ENCODE measurements at regions of chr12 and their contacts with region 1.

Region 1: DNA sequence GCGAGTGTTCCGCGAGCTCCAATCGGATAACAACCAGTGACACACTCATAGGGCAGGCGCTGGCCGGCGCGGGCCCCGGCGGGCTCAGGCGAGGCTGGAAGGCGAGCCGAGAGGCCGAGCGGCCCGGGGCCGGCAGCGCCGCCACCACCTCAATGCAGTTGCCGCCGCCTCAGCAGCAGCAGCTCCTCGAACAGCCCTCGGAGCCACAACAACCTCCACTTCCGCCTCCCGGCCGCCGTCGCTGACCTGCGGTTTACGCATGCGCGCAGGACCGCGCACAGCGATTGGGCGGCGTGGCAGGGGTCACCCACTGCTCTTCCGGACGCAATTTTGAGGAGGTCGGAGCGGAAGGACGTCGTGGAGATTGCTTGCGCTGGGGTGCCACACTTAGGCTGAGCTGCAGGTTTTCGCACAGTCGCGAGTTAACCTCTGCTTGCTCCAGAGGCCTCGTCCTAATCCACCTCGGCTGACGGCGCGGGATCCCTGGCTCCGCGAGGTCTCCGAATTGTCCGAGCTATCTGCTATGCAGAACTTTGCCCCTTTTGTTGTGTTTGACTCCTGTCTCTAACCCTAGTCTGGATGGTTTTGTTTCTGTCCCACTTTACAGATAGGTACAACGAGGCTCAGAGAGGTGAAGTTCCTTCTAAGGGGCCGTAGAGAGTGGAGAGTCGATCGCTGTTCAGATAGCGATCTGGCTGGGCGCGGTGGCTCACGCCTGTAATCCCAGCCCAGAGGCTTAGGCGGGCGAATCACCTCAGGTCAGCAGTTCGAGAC is at the starts of genes ACAD10 and BRAP:
- DNase-seq: peak; percentile 95 to 96
- H3K4me3 ChIP-seq: peak within 1 kb of the TSS; percentile 71
- H3K4me3 Mint-ChIP-seq: peak within 1 kb of the TSS; percentile 92
- H3K27ac Mint-ChIP-seq: peak within 1 kb of the TSS; percentile 95
- H3K4me1 ChIP-seq: peaks cover 9% of the 10 kb centered on the region; the same call in 1 of the 2 replicates
- H3K4me1 Mint-ChIP-seq: peaks cover 21% of the 10 kb centered on the region
- H3K27me3 ChIP-seq: no peaks in the 10 kb centered on the region
- H3K27me3 Mint-ChIP-seq: no peaks in the 10 kb centered on the region
- CTCF ChIP-seq: no peak
- total RNA-seq, gene ACAD10: 19.0 and 26.1 TPM in 2 replicates
- total RNA-seq, gene BRAP: 24.4 and 24.6 TPM in 2 replicates

Region 2: GRCh38 chr12:111741235-111741812 is 55.4 kb after region 1 on chr12:
- CTCF ChIA-PET with region 1: no interaction called
- POLR2A ChIA-PET with region 1: interaction called, 4 read pairs
- intact Hi-C with region 1: loop called (anchors 2 kb)
- DNase-seq: no peak
- H3K4me3 ChIP-seq: no peak overlapping the region
- H3K4me3 Mint-ChIP-seq: no peak overlapping the region
- H3K27ac Mint-ChIP-seq: peak overlapping the region; percentile 31
- H3K4me1 ChIP-seq: 0 out of 2 replicates have a peak, but pooled peaks cover 3% of the 10 kb centered on the region
- H3K4me1 Mint-ChIP-seq: peaks cover 10% of the 10 kb centered on the region
- H3K27me3 ChIP-seq: no peaks in the 10 kb centered on the region
- H3K27me3 Mint-ChIP-seq: no peaks in the 10 kb centered on the region
- CTCF ChIP-seq: no peak

Region 3: DNA sequence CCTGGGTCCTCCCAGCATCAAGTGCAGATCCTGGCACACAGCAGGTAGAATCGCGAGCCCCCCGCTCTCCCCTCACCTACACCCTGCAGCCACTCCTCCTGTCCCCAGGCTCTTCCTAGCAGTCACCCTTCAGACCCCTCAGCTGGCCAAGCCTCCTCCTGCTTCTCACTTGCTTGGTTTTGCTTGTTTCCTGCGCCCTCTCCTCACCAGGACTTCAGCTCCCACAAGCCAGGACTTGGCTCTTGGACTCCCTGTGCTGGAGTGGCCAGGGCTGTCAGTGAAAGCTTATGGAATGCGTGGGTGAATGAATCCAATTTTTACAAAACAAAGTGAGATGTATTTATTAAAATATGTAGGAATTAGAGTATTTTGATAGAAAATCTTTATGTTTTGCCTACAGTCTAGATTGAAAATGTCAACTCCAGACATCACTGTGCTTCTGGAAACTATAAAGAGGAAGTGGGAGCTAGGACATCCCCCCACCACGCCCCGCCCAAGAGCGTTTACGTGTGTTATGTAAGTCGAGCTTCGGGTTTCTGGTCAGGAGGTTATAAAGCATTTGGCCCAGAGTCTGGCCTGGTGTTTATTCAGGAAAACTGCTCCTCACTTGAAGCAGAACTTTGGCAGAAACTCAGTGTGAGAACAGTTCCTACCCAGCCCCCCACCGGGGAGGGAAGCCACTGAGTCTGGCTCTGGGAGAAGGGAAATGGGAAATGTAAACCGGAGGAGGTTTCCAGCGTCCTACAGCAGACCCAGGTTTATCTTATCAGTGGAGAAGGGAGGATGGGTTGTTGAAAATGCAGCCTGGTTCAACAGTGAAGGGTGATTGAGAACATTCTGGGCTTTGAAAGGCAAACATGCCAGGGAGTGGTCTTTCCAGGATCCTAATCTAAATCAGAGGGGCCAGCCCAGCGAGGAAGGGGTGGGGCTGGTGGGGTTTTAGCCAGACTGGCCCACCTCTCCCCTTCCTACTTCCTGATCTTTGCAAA is 89.6 kb after region 1 on chr12:
- CTCF ChIA-PET with region 1: no interaction called
- POLR2A ChIA-PET with region 1: interaction called, 10 read pairs
- intact Hi-C with region 1: loop called (anchors 10 kb)
- DNase-seq: peak; percentile 75 to 82
- H3K4me3 ChIP-seq: peak overlapping the region; percentile 4; the same call in 1 of the 2 replicates
- H3K4me3 Mint-ChIP-seq: peak overlapping the region; percentile 77
- H3K27ac Mint-ChIP-seq: peak overlapping the region; percentile 94
- H3K4me1 ChIP-seq: peaks cover 40% of the 10 kb centered on the region
- H3K4me1 Mint-ChIP-seq: peaks cover 39% of the 10 kb centered on the region
- H3K27me3 ChIP-seq: no peaks in the 10 kb centered on the region
- H3K27me3 Mint-ChIP-seq: no peaks in the 10 kb centered on the region
- CTCF ChIP-seq: no peak